Cardiac septum (tissue), 1 donor: ENCODE measurements at regions of chr4 and their contacts with region 1.

Region 1: GRCh38 chr4:15410750-15411149 is 17.1 kb upstream of the C1QTNF7 start:
- DNase-seq: no peak

Region 2: GRCh38 chr4:15375667-15376066 is 35.1 kb before region 1 on chr4:
- intact Hi-C with region 1: loop called (anchors 5 kb)
- DNase-seq: no peak

Region 3: DNA sequence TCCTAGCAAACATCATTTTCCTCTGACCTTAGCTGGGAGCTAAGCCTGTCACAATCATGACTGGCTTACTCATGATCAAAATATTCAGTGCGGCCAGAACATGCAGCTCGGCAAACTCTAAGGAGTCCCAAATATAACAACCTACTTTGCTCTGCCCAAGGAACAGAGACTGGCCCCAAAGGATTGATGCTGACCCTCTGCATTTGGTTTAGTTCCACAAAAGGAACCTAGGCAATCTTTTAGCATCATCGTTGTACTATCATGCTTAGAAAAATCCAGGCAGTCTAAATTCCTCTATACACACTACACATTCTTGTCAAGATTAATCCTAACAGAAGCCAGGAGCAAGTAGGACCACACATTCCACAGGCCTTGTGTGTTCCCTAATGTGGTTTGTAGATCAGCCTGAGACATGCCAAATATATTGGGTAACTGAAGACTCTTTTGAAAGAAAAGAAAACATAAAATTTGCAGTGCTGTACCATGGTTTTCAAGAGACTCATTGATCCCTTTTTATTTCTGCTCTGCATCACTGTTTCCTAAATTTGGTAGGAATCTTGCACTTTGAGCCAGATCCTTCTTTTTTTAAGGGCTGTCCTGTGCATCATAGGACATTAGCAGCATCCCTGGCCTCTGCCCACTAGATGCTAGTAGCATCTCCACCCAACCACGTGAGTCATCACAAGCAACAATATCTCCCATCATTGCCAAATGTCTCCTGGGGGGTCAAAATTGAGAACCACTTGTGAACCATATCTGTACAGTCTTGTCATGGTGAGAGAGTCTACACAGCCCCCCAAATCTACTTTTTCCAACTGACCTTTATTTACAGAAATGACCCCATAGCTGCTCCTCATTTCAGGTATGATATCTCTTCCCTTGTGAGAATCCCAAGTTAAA is 41.4 kb after region 1 on chr4:
- intact Hi-C with region 1: loop called (anchors 5 kb)
- DNase-seq: no peak